A549 (cell line): ENCODE measurements at regions of chr15 and their contacts with region 1.

Region 1: GRCh38 chr15:58227706-58228543 is 89.7 kb downstream of the AQP9 start:
- DNase-seq: peak; percentile 75 to 88
- ATAC-seq: peak; percentile 58 to 89; a peak in 3 of 6 replicates
- H3K4me3 ChIP-seq: no peak overlapping the region
- H3K27ac ChIP-seq: peak overlapping the region; percentile 41 to 73
- H3K4me1 ChIP-seq: peaks cover 26% of the 10 kb centered on the region
- CTCF ChIP-seq: peak; percentile 99
- EP300 ChIP-seq: no peak
- POLR2A ChIP-seq: no peak
- RAD21 ChIP-seq: peak; percentile 100

Region 2: GRCh38 chr15:58165661-58166060 is 62.3 kb before region 1 on chr15:
- CTCF ChIA-PET with region 1: no interaction called
- POLR2A ChIA-PET with region 1: no interaction called
- DNase-seq: no peak
- ATAC-seq: no peak
- H3K4me3 ChIP-seq: no peak overlapping the region
- H3K27ac ChIP-seq: no peak overlapping the region
- H3K4me1 ChIP-seq: no peaks in the 10 kb centered on the region
- CTCF ChIP-seq: no peak
- EP300 ChIP-seq: no peak
- POLR2A ChIP-seq: no peak
- RAD21 ChIP-seq: no peak

Region 3: GRCh38 chr15:58212909-58213526 is 14.9 kb before region 1 on chr15:
- CTCF ChIA-PET with region 1: interaction called, 40 read pairs
- POLR2A ChIA-PET with region 1: no interaction called
- DNase-seq: peak; percentile 69 to 76
- ATAC-seq: peak; percentile 94 to 97
- H3K4me3 ChIP-seq: no peak overlapping the region
- H3K27ac ChIP-seq: no peak overlapping the region
- H3K4me1 ChIP-seq: no peaks in the 10 kb centered on the region
- CTCF ChIP-seq: peak; percentile 82
- EP300 ChIP-seq: no peak
- POLR2A ChIP-seq: no peak
- RAD21 ChIP-seq: peak; percentile 67 to 71

Region 4: GRCh38 chr15:58249646-58250312 is 21.9 kb after region 1 on chr15:
- CTCF ChIA-PET with region 1: interaction called, 17 read pairs
- POLR2A ChIA-PET with region 1: no interaction called
- DNase-seq: no peak
- ATAC-seq: no peak
- H3K4me3 ChIP-seq: no peak overlapping the region
- H3K27ac ChIP-seq: no peak overlapping the region
- H3K4me1 ChIP-seq: no peaks in the 10 kb centered on the region
- CTCF ChIP-seq: no peak
- EP300 ChIP-seq: no peak
- POLR2A ChIP-seq: no peak
- RAD21 ChIP-seq: no peak

Region 5: GRCh38 chr15:58391088-58391487 is 163.2 kb after region 1 on chr15:
- CTCF ChIA-PET with region 1: no interaction called
- POLR2A ChIA-PET with region 1: no interaction called
- DNase-seq: no peak
- ATAC-seq: no peak
- H3K4me3 ChIP-seq: no peak overlapping the region
- H3K27ac ChIP-seq: 0 out of 6 replicates have a peak overlapping the region, but pooled peaks of 1 of the 2 experiments have one; percentile 15
- H3K4me1 ChIP-seq: peaks cover 24% of the 10 kb centered on the region
- CTCF ChIP-seq: no peak
- EP300 ChIP-seq: no peak
- POLR2A ChIP-seq: no peak
- RAD21 ChIP-seq: no peak

Region 6: DNA sequence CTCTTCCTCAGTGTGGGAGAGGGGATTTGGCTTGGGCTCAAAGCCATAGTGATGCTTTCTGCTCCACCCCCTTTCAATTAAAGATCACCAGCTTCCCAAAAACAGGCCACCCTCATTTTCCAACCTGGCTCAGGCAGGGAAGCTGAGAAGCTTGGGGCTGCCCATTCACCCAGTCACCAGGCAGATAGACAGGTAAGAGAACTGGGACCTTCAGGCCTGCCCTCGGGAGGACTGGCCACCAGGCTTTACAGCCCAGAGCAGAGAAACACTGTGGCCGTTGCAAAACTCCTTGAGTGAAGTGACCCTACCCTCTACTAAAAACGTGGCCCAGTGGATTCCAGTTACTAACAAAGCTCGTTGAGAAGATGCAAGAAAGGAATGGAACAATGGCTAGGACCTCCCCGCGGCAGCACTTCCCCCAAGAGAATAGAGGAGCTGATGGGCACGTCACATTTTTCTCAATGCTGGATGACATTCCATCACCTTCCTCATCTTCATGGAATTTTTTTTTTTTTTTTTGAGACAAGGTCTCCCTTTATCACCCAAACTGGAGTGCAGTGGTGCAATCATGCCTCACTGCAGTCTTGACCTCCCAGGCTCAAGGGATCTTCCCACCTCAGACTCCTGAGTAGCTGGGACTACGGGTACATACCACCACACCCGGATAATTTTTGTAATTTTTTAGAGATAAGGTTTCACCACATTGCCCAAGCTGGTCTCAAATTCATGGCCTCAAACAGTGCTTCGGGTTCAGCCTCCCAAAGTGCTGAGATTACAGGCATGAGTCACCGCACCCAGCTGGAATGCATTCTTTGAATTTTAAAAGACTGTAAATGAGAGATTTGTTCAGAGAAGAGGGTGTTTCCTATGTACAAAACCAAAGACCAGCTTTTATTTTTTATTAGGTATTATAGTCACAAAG is 241.8 kb after region 1 on chr15:
- CTCF ChIA-PET with region 1: interaction called, 30 read pairs
- POLR2A ChIA-PET with region 1: no interaction called
- DNase-seq: peak; percentile 69 to 97
- ATAC-seq: peak; percentile 86 to 93
- H3K4me3 ChIP-seq: no peak overlapping the region
- H3K27ac ChIP-seq: peak overlapping the region; percentile 96 to 99
- H3K4me1 ChIP-seq: peaks cover 58% of the 10 kb centered on the region
- CTCF ChIP-seq: no peak
- EP300 ChIP-seq: peak; percentile 95 to 99
- POLR2A ChIP-seq: no peak
- RAD21 ChIP-seq: peak; percentile 51 to 84

Region 7: DNA sequence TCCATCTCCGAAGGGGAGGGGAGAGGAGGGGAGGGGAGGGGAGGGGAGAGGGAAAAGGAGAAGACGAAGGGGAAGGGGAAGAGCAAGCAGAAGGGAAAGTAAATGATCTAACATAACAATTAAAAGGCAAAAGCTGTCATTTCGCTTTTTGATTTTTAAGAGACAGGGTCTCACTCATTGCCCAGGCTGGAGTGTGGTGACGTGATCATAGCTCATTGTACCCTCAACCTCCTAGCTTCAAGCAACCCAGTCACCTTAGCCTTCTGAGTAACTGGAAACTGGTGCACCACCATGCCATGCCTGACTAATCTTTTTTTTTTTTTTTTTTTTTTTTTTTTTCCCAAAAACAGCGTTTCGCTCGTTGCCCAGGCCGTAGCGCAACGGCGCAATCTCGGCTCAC is 498.9 kb after region 1 on chr15:
- CTCF ChIA-PET with region 1: interaction called, 10 read pairs
- POLR2A ChIA-PET with region 1: no interaction called
- DNase-seq: no peak
- ATAC-seq: no peak
- H3K4me3 ChIP-seq: no peak overlapping the region
- H3K27ac ChIP-seq: no peak overlapping the region
- H3K4me1 ChIP-seq: peaks cover 15% of the 10 kb centered on the region
- CTCF ChIP-seq: no peak
- EP300 ChIP-seq: no peak
- POLR2A ChIP-seq: no peak
- RAD21 ChIP-seq: no peak

Region 8: GRCh38 chr15:58770857-58771620 is 543.1 kb after region 1 on chr15 and contains the start of gene MINDY2:
- CTCF ChIA-PET with region 1: interaction called, 23 read pairs
- POLR2A ChIA-PET with region 1: interaction called, 9 read pairs
- DNase-seq: peak; percentile 97 to 99
- ATAC-seq: peak; percentile 94 to 98
- H3K4me3 ChIP-seq: peak within 1 kb of the TSS; percentile 80
- H3K27ac ChIP-seq: peak within 1 kb of the TSS; percentile 85 to 96
- H3K4me1 ChIP-seq: peaks cover 23% of the 10 kb centered on the region
- CTCF ChIP-seq: peak; percentile 34; the same call in 2 of the 3 replicates
- EP300 ChIP-seq: no peak
- POLR2A ChIP-seq: peak; percentile 81
- RAD21 ChIP-seq: peak; percentile 20 to 48
- polyA plus RNA-seq, gene MINDY2: 4.8 and 7.0 TPM in 2 replicates